Natural killer cell (primary cell): ENCODE measurements at regions of chr12 and their contacts with region 1.

Region 1: DNA sequence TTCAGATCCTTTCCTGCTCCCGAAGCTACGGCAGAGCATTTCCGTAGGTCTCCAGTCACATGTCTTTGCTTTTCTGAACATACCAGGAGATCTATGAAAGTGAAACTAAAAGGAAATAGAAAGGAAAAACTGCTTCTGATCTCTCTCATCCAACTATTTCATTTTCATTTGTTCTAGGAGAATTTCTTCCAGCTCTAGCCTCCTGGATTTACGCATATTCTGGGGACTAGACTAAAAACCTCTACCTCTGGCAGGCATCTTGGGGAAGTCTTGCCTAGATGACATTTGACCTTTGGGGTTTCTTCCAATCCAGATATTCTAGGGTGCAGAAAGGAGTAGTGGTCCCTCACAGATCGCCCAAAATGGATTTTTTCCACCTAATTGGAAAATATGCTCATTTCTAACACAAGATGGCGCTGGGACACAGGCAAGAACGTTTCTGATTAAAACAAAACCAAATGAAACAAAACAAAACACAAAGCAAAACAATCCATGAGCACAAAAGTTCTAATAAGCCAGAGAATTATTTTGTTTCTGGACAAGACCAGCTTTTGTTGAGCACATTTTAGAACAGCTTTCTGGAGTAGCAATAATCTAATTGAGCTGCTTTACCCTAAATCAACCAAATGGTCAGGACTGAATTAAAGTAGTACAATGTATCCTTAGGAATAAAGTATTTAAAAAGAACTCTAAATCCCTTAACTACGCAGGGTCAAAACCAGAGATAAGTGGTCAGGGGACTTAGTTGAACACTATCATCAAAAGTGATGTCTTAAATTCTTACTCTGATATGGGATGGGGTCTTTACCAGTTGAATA is 12.3 kb upstream of the PARP11 start:
- DNase-seq: peak in 1 of 2 donors; percentile 83
- ATAC-seq: peak in 2 of 3 donors; percentile 57 to 62
- H3K4me3 ChIP-seq: no peak overlapping the region
- H3K4me3 Mint-ChIP-seq: no peak overlapping the region
- H3K27ac ChIP-seq: no peak overlapping the region
- H3K27ac Mint-ChIP-seq: no peak overlapping the region
- H3K4me1 ChIP-seq: no peaks in the 10 kb centered on the region
- H3K4me1 Mint-ChIP-seq: peaks cover 5 to 6% of the 10 kb centered on the region in 2 donors
- H3K27me3 ChIP-seq: no peaks in the 10 kb centered on the region
- H3K27me3 Mint-ChIP-seq: peaks cover 6 to 13% of the 10 kb centered on the region in 2 donors
- CTCF ChIP-seq: peak; percentile 78

Region 2: GRCh38 chr12:3988519-3989448 is 103.3 kb after region 1 on chr12:
- intact Hi-C with region 1: no loop called
- DNase-seq: peak in 1 of 2 donors; percentile 59
- ATAC-seq: peak in 2 of 3 donors; percentile 26 to 47
- H3K4me3 ChIP-seq: no peak overlapping the region
- H3K4me3 Mint-ChIP-seq: no peak overlapping the region
- H3K27ac ChIP-seq: no peak overlapping the region
- H3K27ac Mint-ChIP-seq: no peak overlapping the region
- H3K4me1 ChIP-seq: peaks cover 5% of the 10 kb centered on the region
- H3K4me1 Mint-ChIP-seq: peaks cover 6% of the 10 kb centered on the region in 2 donors
- H3K27me3 ChIP-seq: no peaks in the 10 kb centered on the region
- H3K27me3 Mint-ChIP-seq: peaks cover 5 to 27% of the 10 kb centered on the region in 2 donors
- CTCF ChIP-seq: no peak

Region 3: DNA sequence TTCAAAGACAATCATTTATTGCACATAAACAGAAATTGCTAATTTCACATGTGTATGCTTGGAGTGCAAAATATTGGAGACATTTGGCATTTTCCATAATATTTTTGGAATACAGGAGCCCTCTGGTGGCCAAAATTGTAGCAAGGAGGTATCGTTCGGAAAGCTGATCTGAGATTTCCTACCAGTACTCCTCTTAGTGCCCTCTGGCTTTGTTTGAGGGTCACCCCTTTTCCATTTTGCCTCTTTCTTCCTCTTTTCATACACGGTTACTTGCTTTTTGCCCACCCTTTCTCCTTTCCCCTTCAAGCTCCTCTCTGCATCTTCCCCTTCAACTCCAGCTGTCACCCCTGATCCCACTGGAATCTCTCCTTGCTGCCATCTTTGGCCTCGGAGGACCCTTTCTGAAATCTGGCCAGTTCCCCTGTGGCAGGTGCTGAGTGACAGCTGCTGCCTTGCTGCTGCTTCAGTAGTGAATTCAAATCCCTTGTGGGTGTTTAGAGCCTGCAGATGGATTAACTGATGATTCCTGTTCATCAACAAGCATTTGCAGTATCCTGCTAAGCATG is 152.3 kb after region 1 on chr12:
- intact Hi-C with region 1: loop called (anchors 5 kb)
- DNase-seq: peak in 1 of 2 donors; percentile 47
- ATAC-seq: no peak
- H3K4me3 ChIP-seq: no peak overlapping the region
- H3K4me3 Mint-ChIP-seq: no peak overlapping the region
- H3K27ac ChIP-seq: no peak overlapping the region
- H3K27ac Mint-ChIP-seq: no peak overlapping the region
- H3K4me1 ChIP-seq: no peaks in the 10 kb centered on the region
- H3K4me1 Mint-ChIP-seq: no peaks in the 10 kb centered on the region
- H3K27me3 ChIP-seq: no peaks in the 10 kb centered on the region
- H3K27me3 Mint-ChIP-seq: peaks cover 25 to 41% of the 10 kb centered on the region in 2 donors
- CTCF ChIP-seq: peak; percentile 17

Region 4: DNA sequence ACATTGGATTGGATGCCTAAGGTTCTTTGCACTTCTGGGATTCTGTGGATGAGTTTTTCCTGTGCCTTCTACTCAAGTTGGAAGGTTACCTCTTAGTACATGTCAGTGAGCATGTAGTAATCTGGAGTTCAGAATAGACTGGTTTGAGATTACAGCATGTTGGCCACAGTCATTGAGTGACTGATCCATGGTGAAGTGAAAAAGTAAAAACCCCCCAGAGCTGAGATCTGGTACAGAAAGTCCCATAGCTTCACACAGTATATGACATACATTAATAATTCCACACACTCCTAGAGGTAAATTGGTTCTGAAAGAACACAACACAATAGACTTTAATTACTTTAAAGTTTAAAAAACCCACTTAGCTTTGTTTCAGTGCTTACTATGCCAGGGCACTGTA is 376.2 kb after region 1 on chr12:
- intact Hi-C with region 1: no loop called
- DNase-seq: no peak
- ATAC-seq: no peak
- H3K4me3 ChIP-seq: no peak overlapping the region
- H3K4me3 Mint-ChIP-seq: no peak overlapping the region
- H3K27ac ChIP-seq: no peak overlapping the region
- H3K27ac Mint-ChIP-seq: no peak overlapping the region
- H3K4me1 ChIP-seq: no peaks in the 10 kb centered on the region
- H3K4me1 Mint-ChIP-seq: no peaks in the 10 kb centered on the region
- H3K27me3 ChIP-seq: no peaks in the 10 kb centered on the region
- H3K27me3 Mint-ChIP-seq: peaks cover 0 to 7% of the 10 kb centered on the region in 2 donors
- CTCF ChIP-seq: no peak

Region 5: DNA sequence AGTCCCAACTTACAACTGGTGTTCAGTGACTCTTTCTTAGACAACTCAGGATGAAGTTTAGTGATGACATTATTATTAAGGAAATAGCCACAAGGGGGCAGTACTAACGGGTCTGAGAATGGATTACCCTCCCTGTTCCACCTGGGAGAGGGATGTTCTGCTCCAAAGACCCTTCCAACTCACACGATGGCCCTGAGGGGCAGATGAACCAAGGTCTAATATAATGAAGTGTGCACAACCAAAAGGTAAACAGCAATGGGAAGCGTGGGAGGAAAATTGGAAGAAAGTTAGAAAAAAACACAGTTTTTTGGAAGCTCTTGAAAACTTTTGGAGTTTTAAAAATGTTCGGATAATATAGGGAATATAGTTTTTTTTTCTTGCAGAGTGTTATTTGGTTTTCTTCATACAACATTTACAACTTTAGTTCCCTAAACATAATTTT is 536.1 kb after region 1 on chr12:
- intact Hi-C with region 1: loop called (anchors 5 kb)
- DNase-seq: peak in 1 of 2 donors; percentile 72
- ATAC-seq: peak in 2 of 3 donors; percentile 52 to 61
- H3K4me3 ChIP-seq: no peak overlapping the region
- H3K4me3 Mint-ChIP-seq: no peak overlapping the region
- H3K27ac ChIP-seq: no peak overlapping the region
- H3K27ac Mint-ChIP-seq: no peak overlapping the region
- H3K4me1 ChIP-seq: no peaks in the 10 kb centered on the region
- H3K4me1 Mint-ChIP-seq: no peaks in the 10 kb centered on the region
- H3K27me3 ChIP-seq: no peaks in the 10 kb centered on the region
- H3K27me3 Mint-ChIP-seq: peaks cover 9 to 11% of the 10 kb centered on the region in 2 donors
- CTCF ChIP-seq: peak; percentile 77